H1 (cell line): ENCODE measurements at regions of chr1 and their contacts with region 1.

Region 1: DNA sequence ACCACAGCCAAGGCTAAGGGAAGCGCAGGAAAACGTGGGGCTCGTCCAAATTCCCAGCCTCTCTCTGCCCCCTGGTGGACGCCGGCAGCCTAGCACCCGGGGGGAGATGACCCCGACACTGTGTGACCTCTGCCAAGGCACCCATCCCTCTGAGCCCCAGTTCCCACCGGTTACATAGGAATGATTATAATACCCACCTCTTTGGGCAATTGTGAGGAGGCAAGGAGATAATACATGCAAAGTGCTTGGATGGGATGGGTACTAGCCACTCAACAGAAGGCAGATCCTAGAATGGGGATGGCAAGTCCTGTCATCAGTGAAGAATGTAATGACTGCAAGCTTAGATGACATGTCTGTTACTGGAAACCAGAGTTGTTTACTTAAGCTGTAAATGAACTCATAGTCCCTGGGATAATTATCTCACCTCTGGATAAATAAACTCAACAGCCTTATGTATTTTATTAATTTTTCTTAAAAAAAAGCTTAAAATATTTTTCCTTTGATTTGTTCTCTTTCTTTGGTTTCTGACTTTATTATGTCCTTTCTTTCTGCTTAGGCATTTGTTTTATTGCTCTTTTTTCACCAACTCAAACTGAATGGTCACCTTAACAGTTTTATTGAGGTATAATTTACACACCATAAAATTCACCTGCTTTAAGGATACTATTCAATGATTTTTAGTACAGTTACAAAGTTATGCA is 11.3 kb upstream of the BMP8B start:
- DNase-seq: peak in 1 of 2 experiments; percentile 98
- H3K4me3 ChIP-seq: no peak overlapping the region
- H3K27ac ChIP-seq: no peak overlapping the region
- H3K4me1 ChIP-seq: peaks cover 0 to 3% (median 0%) of the 10 kb centered on the region in 4 experiments; a peak in 2 of 7 replicates
- H3K27me3 ChIP-seq: no peaks in the 10 kb centered on the region; a peak in 1 of 7 replicates
- CTCF ChIP-seq: peak; percentile 73 to 85 (median 78)
- EP300 ChIP-seq: no peak
- POLR2A ChIP-seq: no peak
- RAD21 ChIP-seq: peak; percentile 65 to 69

Region 2: DNA sequence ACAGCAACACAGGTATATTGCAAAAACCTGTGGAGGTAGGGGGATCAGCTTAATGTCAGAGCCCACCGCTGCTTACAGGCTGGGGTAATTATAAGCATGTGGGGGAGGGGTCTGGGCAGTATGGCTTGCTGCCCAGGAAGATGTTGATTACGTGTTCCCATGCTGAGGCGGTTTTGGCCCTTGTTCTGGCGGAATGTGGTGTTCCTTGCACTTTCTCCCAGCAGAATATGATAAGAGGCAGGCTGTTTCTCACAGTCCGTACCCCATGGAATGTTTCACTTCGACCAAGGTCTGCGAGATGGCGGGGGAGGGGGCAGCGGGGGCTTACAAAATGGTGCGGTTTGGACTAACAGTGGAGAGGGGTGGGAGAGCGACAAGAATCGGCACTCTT is 98.9 kb before region 1 on chr1:
- CTCF ChIA-PET with region 1: interaction called, 12 read pairs
- POLR2A ChIA-PET with region 1: interaction called, 4 read pairs
- DNase-seq: no peak
- H3K4me3 ChIP-seq: peak overlapping the region; percentile 3 to 48 (median 22); a peak in 5 of 8 replicates
- H3K27ac ChIP-seq: no peak overlapping the region
- H3K4me1 ChIP-seq: peaks cover 0 to 17% (median 9%) of the 10 kb centered on the region in 4 experiments; a peak in 5 of 7 replicates
- H3K27me3 ChIP-seq: peaks cover 29 to 93% (median 65%) of the 10 kb centered on the region in 4 experiments
- CTCF ChIP-seq: no peak
- EP300 ChIP-seq: no peak
- POLR2A ChIP-seq: no peak
- RAD21 ChIP-seq: no peak

Region 3: DNA sequence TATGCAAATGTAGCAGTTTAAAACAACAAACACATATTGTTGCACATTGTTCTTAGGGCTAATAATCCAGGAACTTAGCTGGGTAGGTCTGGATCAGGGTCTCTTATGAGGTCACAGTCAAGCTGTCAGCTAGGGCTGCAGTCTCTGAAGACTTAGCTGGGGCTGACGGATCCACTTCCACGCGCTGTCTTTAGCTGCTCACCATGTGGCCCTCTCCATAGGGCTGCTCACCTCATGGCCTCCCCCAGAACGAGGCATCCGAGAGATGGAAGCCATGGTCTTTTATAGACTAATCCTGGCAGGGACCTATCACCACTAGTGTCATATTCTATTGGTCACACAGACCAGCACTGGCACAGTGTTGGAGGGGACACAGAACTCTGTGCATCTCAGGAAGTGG is 20.1 kb before region 1 on chr1:
- CTCF ChIA-PET with region 1: interaction called, 22 read pairs
- POLR2A ChIA-PET with region 1: no interaction called
- DNase-seq: no peak
- H3K4me3 ChIP-seq: no peak overlapping the region
- H3K27ac ChIP-seq: no peak overlapping the region
- H3K4me1 ChIP-seq: no peaks in the 10 kb centered on the region
- H3K27me3 ChIP-seq: peaks cover 0 to 9% (median 2%) of the 10 kb centered on the region in 4 experiments; a peak in 4 of 7 replicates
- CTCF ChIP-seq: no peak
- EP300 ChIP-seq: no peak
- POLR2A ChIP-seq: no peak
- RAD21 ChIP-seq: no peak

Region 4: GRCh38 chr1:39816415-39817090 is 16.6 kb after region 1 on chr1:
- CTCF ChIA-PET with region 1: interaction called, 22 read pairs
- POLR2A ChIA-PET with region 1: no interaction called
- DNase-seq: peak; percentile 43 to 92
- H3K4me3 ChIP-seq: no peak overlapping the region
- H3K27ac ChIP-seq: no peak overlapping the region
- H3K4me1 ChIP-seq: no peaks in the 10 kb centered on the region
- H3K27me3 ChIP-seq: no peaks in the 10 kb centered on the region; a peak in 1 of 7 replicates
- CTCF ChIP-seq: peak; percentile 81 to 85 (median 82)
- EP300 ChIP-seq: no peak
- POLR2A ChIP-seq: no peak
- RAD21 ChIP-seq: peak; percentile 86 to 89

Region 5: DNA sequence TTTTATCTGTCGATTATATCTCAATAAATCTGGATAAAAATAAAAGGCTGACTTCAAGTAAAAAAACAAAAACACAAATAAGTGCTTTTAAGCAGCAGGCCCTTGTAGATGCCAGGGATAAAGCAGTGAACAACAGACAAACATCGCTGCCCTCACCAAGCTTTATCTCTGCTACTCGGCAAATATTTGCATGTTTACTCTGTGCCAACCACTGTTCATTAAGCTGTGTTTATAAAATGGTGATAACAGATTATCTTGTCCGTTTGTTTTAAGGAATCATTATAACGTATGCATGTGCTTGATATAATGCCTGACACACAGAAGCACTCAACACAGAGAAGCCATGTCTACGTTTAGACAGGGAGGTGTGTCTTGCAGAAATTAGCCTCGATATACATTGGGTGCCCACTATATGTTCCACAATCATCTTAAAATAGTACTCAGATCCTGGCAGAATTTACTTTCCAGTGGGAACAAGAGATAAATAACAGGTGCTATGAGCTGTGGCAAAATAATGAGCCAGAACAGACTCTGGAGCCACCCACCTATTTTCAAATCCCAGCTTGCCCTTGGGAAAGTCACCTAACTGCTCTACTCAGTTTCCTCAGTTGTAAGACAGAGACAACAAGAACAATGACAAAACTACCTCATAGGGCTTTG is 36.1 kb after region 1 on chr1:
- CTCF ChIA-PET with region 1: interaction called, 10 read pairs
- POLR2A ChIA-PET with region 1: no interaction called
- DNase-seq: no peak
- H3K4me3 ChIP-seq: no peak overlapping the region
- H3K27ac ChIP-seq: no peak overlapping the region
- H3K4me1 ChIP-seq: no peaks in the 10 kb centered on the region
- H3K27me3 ChIP-seq: no peaks in the 10 kb centered on the region
- CTCF ChIP-seq: no peak
- EP300 ChIP-seq: no peak
- POLR2A ChIP-seq: no peak
- RAD21 ChIP-seq: no peak